ENCODE measurements at regions of chr21 and their contacts with region 1.

Region 1: GRCh38 chr21:19461481-19462205 is 1058.1 kb upstream of the TMPRSS15 start:
- DNase-seq: no peak
- ATAC-seq: no peak
- H3K4me3 ChIP-seq: no peak overlapping the region
- H3K4me3 Mint-ChIP-seq: no peak overlapping the region
- H3K27ac ChIP-seq: no peak overlapping the region
- H3K27ac Mint-ChIP-seq: no peak overlapping the region
- H3K4me1 ChIP-seq: no peaks in the 10 kb centered on the region
- H3K4me1 Mint-ChIP-seq: no peaks in the 10 kb centered on the region
- H3K27me3 ChIP-seq: no peaks in the 10 kb centered on the region
- H3K27me3 Mint-ChIP-seq: no peaks in the 10 kb centered on the region
- CTCF ChIP-seq: no peak

Region 2: DNA sequence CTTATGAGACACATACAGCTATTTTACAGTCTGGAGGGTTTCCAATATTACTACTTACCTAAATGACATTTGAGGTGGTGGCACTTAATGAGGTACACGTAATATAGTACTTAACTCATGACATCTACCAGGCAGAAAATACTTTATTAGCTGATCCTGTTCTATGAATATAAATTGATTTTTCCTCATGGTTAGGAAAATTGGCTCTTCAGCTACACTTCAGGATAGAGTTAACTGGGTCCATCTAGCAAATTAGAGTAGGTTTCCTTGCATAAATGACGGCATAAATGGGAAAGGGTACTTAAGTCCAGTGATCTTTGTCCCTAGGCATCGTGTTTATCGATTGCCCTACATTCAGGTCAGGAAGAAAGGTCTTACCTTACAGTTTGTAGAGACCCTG is 69.3 kb before region 1 on chr21:
- CTCF ChIA-PET with region 1: no interaction called
- POLR2A ChIA-PET with region 1: no interaction called
- intact Hi-C with region 1: loop called in 1 of 2 experiments (anchors 10 kb)
- DNase-seq: no peak
- ATAC-seq: no peak
- H3K4me3 ChIP-seq: no peak overlapping the region
- H3K4me3 Mint-ChIP-seq: no peak overlapping the region
- H3K27ac ChIP-seq: no peak overlapping the region
- H3K27ac Mint-ChIP-seq: no peak overlapping the region
- H3K4me1 ChIP-seq: no peaks in the 10 kb centered on the region
- H3K4me1 Mint-ChIP-seq: no peaks in the 10 kb centered on the region
- H3K27me3 ChIP-seq: no peaks in the 10 kb centered on the region
- H3K27me3 Mint-ChIP-seq: no peaks in the 10 kb centered on the region
- CTCF ChIP-seq: no peak

Region 3: GRCh38 chr21:19440792-19441655 is 20.6 kb before region 1 on chr21:
- CTCF ChIA-PET with region 1: no interaction called
- POLR2A ChIA-PET with region 1: no interaction called
- intact Hi-C with region 1: loop called in 1 of 2 experiments (anchors 2 kb)
- DNase-seq: no peak
- ATAC-seq: no peak
- H3K4me3 ChIP-seq: no peak overlapping the region
- H3K4me3 Mint-ChIP-seq: no peak overlapping the region
- H3K27ac ChIP-seq: no peak overlapping the region
- H3K27ac Mint-ChIP-seq: no peak overlapping the region
- H3K4me1 ChIP-seq: no peaks in the 10 kb centered on the region
- H3K4me1 Mint-ChIP-seq: no peaks in the 10 kb centered on the region
- H3K27me3 ChIP-seq: no peaks in the 10 kb centered on the region
- H3K27me3 Mint-ChIP-seq: no peaks in the 10 kb centered on the region
- CTCF ChIP-seq: no peak

Region 4: GRCh38 chr21:19475525-19475924 is 13.9 kb after region 1 on chr21:
- CTCF ChIA-PET with region 1: no interaction called
- POLR2A ChIA-PET with region 1: no interaction called
- intact Hi-C with region 1: loop called in 1 of 2 experiments (anchors 1 kb)
- DNase-seq: no peak
- ATAC-seq: no peak
- H3K4me3 ChIP-seq: no peak overlapping the region
- H3K4me3 Mint-ChIP-seq: no peak overlapping the region
- H3K27ac ChIP-seq: no peak overlapping the region
- H3K27ac Mint-ChIP-seq: no peak overlapping the region
- H3K4me1 ChIP-seq: no peaks in the 10 kb centered on the region
- H3K4me1 Mint-ChIP-seq: no peaks in the 10 kb centered on the region
- H3K27me3 ChIP-seq: no peaks in the 10 kb centered on the region
- H3K27me3 Mint-ChIP-seq: no peaks in the 10 kb centered on the region
- CTCF ChIP-seq: no peak

Measured in CD8-positive, alpha-beta T cell (primary cell).